ENCODE measurements at regions of chr4 and their contacts with region 1.

Region 1: GRCh38 chr4:77819843-77820648 is 878 bp upstream of the CNOT6L start:
- DNase-seq: peak; percentile 96
- ATAC-seq: peak; percentile 81
- H3K4me3 Mint-ChIP-seq: peak overlapping the region; percentile 92
- H3K27ac Mint-ChIP-seq: peak overlapping the region; percentile 99
- H3K4me1 Mint-ChIP-seq: peaks cover 36% of the 10 kb centered on the region
- H3K27me3 Mint-ChIP-seq: no peaks in the 10 kb centered on the region

Region 2: DNA sequence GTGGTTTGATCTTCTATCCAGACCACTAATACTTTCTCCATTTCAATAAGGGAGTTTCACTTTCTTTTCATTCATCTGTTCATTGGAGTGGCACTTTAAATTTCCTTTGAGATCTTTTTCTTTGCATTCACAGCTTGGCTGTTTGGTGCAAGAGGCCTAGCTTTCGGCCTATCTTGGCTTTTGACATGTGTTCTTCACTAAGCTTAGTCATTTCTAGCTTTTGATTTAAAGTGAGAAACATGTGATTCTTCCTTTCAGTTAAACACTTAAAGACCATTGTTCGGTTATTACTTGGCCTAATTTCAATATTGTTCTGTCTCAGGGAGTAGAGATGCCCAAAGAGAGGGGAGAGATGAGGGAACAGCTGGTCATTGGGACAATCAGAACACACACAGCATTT is 190.2 kb before region 1 on chr4:
- CTCF ChIA-PET with region 1: no interaction called
- POLR2A ChIA-PET with region 1: no interaction called
- DNase-seq: no peak
- ATAC-seq: no peak
- H3K4me3 Mint-ChIP-seq: no peak overlapping the region
- H3K27ac Mint-ChIP-seq: no peak overlapping the region
- H3K4me1 Mint-ChIP-seq: peaks cover 8% of the 10 kb centered on the region
- H3K27me3 Mint-ChIP-seq: no peaks in the 10 kb centered on the region

Region 3: GRCh38 chr4:77773101-77773500 is 46.9 kb before region 1 on chr4:
- CTCF ChIA-PET with region 1: no interaction called
- POLR2A ChIA-PET with region 1: no interaction called
- DNase-seq: no peak
- ATAC-seq: no peak
- H3K4me3 Mint-ChIP-seq: no peak overlapping the region
- H3K27ac Mint-ChIP-seq: no peak overlapping the region
- H3K4me1 Mint-ChIP-seq: peaks cover 12% of the 10 kb centered on the region
- H3K27me3 Mint-ChIP-seq: no peaks in the 10 kb centered on the region

Region 4: DNA sequence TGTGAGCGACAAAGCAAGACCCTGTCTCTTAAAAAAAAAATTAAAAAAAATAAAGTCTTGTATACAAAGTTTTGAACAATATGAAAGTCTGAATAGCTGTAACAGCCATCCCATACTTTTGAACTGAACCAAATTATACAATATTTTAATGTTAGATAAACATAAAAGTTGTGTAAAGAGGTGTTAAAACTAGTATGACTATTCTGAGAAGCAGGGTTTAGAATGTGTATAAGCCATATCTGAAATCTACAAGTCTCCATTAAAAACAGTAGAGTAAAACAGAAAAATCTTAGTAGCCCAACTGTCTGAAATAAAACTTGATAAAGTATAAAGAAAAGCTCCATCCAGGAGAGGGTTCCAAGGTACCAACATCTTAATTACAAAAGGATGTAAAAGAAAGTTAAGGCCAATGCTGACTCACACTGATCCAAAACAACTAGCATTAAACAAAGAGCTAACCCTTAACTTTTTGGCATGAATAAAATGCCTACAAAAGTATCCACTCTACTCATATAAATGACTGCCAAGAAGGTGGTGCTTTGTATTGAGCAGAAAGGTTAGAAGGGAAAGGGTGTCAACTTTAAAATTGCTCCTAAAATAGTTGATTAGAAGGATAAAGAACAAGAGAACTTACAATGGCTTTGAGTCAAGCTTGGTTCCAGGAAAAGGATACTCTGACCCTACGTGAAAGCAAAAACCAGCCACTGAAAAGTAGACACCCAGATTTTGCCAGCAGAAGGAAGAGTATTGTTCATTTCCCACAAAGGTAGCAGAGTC is 19.4 kb before region 1 on chr4:
- CTCF ChIA-PET with region 1: interaction called, 22 read pairs
- POLR2A ChIA-PET with region 1: interaction called, 49 read pairs
- DNase-seq: no peak
- ATAC-seq: peak; percentile 59
- H3K4me3 Mint-ChIP-seq: peak overlapping the region; percentile 59
- H3K27ac Mint-ChIP-seq: peak overlapping the region; percentile 80
- H3K4me1 Mint-ChIP-seq: peaks cover 63% of the 10 kb centered on the region
- H3K27me3 Mint-ChIP-seq: no peaks in the 10 kb centered on the region

Region 5: GRCh38 chr4:77833126-77833724 is 13.2 kb after region 1 on chr4:
- CTCF ChIA-PET with region 1: interaction called, 4 read pairs
- POLR2A ChIA-PET with region 1: interaction called, 14 read pairs
- DNase-seq: no peak
- ATAC-seq: no peak
- H3K4me3 Mint-ChIP-seq: no peak overlapping the region
- H3K27ac Mint-ChIP-seq: no peak overlapping the region
- H3K4me1 Mint-ChIP-seq: peaks cover 3% of the 10 kb centered on the region
- H3K27me3 Mint-ChIP-seq: no peaks in the 10 kb centered on the region

Region 6: GRCh38 chr4:77852892-77853495 is 32.9 kb after region 1 on chr4:
- CTCF ChIA-PET with region 1: interaction called, 18 read pairs
- POLR2A ChIA-PET with region 1: interaction called, 437 read pairs
- DNase-seq: peak; percentile 87
- ATAC-seq: peak; percentile 91
- H3K4me3 Mint-ChIP-seq: peak overlapping the region; percentile 67
- H3K27ac Mint-ChIP-seq: peak overlapping the region; percentile 93
- H3K4me1 Mint-ChIP-seq: peaks cover 63% of the 10 kb centered on the region
- H3K27me3 Mint-ChIP-seq: no peaks in the 10 kb centered on the region

Region 7: GRCh38 chr4:77862478-77863216 is 42.6 kb after region 1 on chr4 and contains the start of gene MRPL1:
- CTCF ChIA-PET with region 1: interaction called, 34 read pairs
- POLR2A ChIA-PET with region 1: interaction called, 437 read pairs
- DNase-seq: peak; percentile 93
- ATAC-seq: peak; percentile 87
- H3K4me3 Mint-ChIP-seq: peak within 1 kb of the TSS; percentile 98
- H3K27ac Mint-ChIP-seq: peak within 1 kb of the TSS; percentile 99
- H3K4me1 Mint-ChIP-seq: peaks cover 63% of the 10 kb centered on the region
- H3K27me3 Mint-ChIP-seq: no peaks in the 10 kb centered on the region
- total RNA-seq, gene MRPL1: 45.6 to 47.2 TPM

Region 8: GRCh38 chr4:77950203-77950602 is 130.2 kb after region 1 on chr4:
- CTCF ChIA-PET with region 1: no interaction called
- POLR2A ChIA-PET with region 1: no interaction called
- DNase-seq: no peak
- ATAC-seq: no peak
- H3K4me3 Mint-ChIP-seq: no peak overlapping the region
- H3K27ac Mint-ChIP-seq: no peak overlapping the region
- H3K4me1 Mint-ChIP-seq: no peaks in the 10 kb centered on the region
- H3K27me3 Mint-ChIP-seq: no peaks in the 10 kb centered on the region